ENCODE measurements at regions of chr5 and their contacts with region 1.

Region 1: DNA sequence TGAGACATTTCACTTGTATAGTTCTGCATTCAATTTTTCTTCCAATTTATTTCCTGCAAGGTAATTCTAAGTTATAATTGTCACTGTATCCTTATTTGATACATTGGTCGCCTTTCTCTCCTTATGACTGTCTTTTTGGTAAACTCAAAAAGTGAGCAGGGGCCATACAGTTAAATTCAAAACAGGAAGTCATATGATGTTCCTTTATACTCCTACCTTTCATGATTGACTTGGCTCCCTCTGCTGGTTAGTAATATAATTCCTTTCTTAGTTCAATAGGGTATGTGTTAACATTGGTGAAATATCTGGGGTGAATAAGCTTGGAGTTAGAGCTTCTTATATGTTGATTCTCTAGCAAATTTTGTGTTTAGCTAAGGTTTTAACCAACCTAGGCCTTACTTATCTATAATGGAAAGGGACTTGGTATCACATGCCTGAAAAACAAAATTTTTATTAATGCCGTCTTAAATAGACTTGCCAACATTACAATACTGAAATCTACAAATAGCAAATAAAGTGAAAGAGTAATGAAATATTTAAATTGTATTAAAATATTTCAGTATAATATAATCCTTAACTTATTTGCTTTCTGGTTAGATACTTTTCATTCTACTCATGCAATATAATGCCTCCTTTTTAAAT is 6.0 kb upstream of the NIPBL start:
- DNase-seq: peak; percentile 81
- H3K4me3 ChIP-seq: no peak overlapping the region
- H3K27ac ChIP-seq: no peak overlapping the region
- H3K4me1 ChIP-seq: peaks cover 39% of the 10 kb centered on the region
- CTCF ChIP-seq: peak; percentile 91

Region 2: GRCh38 chr5:36744773-36745589 is 125.5 kb before region 1 on chr5:
- CTCF ChIA-PET with region 1: no interaction called
- POLR2A ChIA-PET with region 1: interaction called, 4 read pairs
- intact Hi-C with region 1: loop called (anchors 2 kb)
- DNase-seq: peak; percentile 61
- H3K4me3 ChIP-seq: peak overlapping the region; percentile 67
- H3K27ac ChIP-seq: no peak overlapping the region
- H3K4me1 ChIP-seq: peaks cover 15% of the 10 kb centered on the region
- CTCF ChIP-seq: peak; percentile 24; the same call in 1 of the 2 replicates

Region 3: DNA sequence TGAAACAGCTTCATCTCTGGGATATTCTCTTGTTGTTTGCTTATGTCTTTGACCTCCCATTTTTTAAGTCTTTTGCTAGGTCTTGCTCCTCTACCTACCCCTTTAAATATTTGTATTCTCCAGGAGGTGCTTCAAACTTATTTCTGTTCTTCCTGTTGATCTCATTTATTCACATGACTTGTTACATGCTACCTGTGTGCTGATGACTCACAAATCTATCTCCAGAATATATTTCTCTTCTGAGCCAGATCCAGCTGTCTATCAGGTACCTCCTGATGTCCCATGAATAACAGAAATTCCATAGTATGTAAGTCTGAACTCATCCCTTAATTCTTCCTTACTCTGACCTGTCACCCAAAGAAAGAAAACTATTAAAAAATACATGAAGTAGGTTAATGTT is 17.0 kb after region 1 on chr5:
- CTCF ChIA-PET with region 1: no interaction called
- POLR2A ChIA-PET with region 1: no interaction called
- intact Hi-C with region 1: no loop called
- DNase-seq: no peak
- H3K4me3 ChIP-seq: no peak overlapping the region
- H3K27ac ChIP-seq: no peak overlapping the region
- H3K4me1 ChIP-seq: peaks cover 11% of the 10 kb centered on the region
- CTCF ChIP-seq: no peak

Measured in OCI-LY7 (cell line).